ENCODE measurements at regions of chr6 and their contacts with region 1.

Region 1: GRCh38 chr6:87856478-87856877 is 154.4 kb upstream of the AKIRIN2 start:
- DNase-seq: no peak
- H3K4me3 Mint-ChIP-seq: no peak overlapping the region
- H3K27ac Mint-ChIP-seq: no peak overlapping the region
- H3K4me1 Mint-ChIP-seq: no peaks in the 10 kb centered on the region
- H3K27me3 Mint-ChIP-seq: peaks cover 2% of the 10 kb centered on the region

Region 2: GRCh38 chr6:87929843-87930288 is 73.4 kb after region 1 on chr6:
- intact Hi-C with region 1: loop called (anchors 2 kb)
- DNase-seq: peak; percentile 85
- H3K4me3 Mint-ChIP-seq: no peak overlapping the region
- H3K27ac Mint-ChIP-seq: no peak overlapping the region
- H3K4me1 Mint-ChIP-seq: no peaks in the 10 kb centered on the region
- H3K27me3 Mint-ChIP-seq: peaks cover 9% of the 10 kb centered on the region

Region 3: DNA sequence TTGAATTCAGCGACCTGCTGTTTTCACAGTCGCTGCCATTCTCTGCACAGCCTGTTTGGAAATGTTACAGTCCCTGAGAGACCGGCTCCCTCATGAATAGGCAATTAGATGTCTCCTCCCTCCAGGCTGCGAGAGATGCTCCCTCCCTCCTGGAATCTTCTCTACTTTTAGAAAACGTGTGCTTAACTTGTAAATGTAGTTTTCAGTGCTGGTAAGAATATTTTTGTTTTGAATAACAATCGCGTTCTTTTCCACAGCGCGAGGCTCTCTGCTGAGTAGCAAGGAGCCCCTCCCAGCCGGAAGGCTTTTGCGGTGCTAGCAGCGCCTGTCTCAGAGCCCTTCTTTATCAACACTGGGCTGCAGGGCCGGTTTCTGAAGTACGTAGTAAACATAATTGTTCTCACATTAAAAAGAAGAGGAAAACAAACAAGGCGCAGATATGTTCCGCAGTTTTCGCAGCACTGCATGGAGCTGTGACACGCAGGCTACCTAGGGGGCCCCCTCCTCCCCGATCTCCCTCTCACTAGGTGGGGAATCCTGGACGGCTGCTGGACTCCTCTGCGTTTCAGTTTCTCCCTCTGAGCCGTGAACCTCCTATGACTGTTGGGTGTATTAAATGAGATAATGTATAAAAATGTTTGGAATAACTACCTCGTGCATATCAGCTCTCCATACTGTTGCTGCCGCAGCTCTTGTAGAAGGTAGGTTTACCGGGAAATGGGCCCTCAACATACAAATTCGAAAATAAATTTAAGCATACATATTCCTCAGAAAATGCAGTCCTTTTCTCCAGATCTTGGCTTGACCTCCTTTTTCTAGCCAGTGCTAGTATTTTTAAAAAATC is 112.2 kb after region 1 on chr6:
- intact Hi-C with region 1: no loop called
- DNase-seq: peak; percentile 65
- H3K4me3 Mint-ChIP-seq: no peak overlapping the region
- H3K27ac Mint-ChIP-seq: no peak overlapping the region
- H3K4me1 Mint-ChIP-seq: no peaks in the 10 kb centered on the region
- H3K27me3 Mint-ChIP-seq: peaks cover 9% of the 10 kb centered on the region

Measured in activated CD4-positive, alpha-beta T cell treated with anti-CD3 and anti-CD28 coated beads, Interleukin-2, amount 10 ng/mL, durations not matched to agents 24 days and 14 days (primary cell).